ENCODE measurements at regions of chr7 and their contacts with region 1.

Region 1: GRCh38 chr7:23273141-23273599 is 26.0 kb upstream of the MALSU1 start:
- DNase-seq: peak; percentile 91
- H3K4me3 Mint-ChIP-seq: peak overlapping the region; percentile 29
- H3K27ac Mint-ChIP-seq: no peak overlapping the region
- H3K4me1 Mint-ChIP-seq: peaks cover 15% of the 10 kb centered on the region
- H3K27me3 Mint-ChIP-seq: peaks cover 5% of the 10 kb centered on the region

Region 2: GRCh38 chr7:23114896-23115295 is 158.3 kb before region 1 on chr7:
- CTCF ChIA-PET with region 1: no interaction called
- POLR2A ChIA-PET with region 1: no interaction called
- DNase-seq: no peak
- H3K4me3 Mint-ChIP-seq: no peak overlapping the region
- H3K27ac Mint-ChIP-seq: no peak overlapping the region
- H3K4me1 Mint-ChIP-seq: peaks cover 2% of the 10 kb centered on the region
- H3K27me3 Mint-ChIP-seq: no peaks in the 10 kb centered on the region

Region 3: DNA sequence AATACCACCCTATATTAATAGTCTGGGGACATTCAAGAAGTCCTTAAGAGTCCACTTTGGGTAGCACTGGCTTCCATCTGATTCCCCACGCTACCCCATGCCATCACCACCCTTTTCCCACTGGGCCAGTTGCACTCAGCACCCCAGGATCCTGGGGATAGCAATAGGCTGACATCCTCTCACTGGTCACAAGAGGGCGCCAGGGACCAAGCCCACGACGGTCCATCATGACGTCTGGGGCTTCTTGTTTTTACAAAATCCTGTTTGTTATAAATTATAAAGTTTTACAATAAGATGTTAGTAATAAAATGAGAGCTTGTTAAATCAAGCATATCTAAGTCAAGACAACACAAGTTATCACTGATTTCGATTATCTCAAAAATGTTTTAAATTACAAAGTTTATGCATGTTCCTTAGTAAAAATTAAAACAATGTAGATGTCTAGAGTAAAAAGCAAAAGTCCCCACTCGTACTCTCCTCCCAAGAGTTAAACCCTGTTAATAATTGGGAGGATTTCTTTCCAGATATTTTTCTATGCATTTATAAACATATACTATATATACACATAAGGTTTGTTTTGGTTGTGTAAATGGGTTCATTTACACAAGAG is 11.2 kb before region 1 on chr7:
- CTCF ChIA-PET with region 1: interaction called, 90 read pairs
- POLR2A ChIA-PET with region 1: no interaction called
- DNase-seq: peak; percentile 65
- H3K4me3 Mint-ChIP-seq: no peak overlapping the region
- H3K27ac Mint-ChIP-seq: no peak overlapping the region
- H3K4me1 Mint-ChIP-seq: peaks cover 5% of the 10 kb centered on the region
- H3K27me3 Mint-ChIP-seq: peaks cover 12% of the 10 kb centered on the region

Region 4: GRCh38 chr7:23298885-23299769 is 26.0 kb after region 1 on chr7 and contains the start of gene MALSU1:
- CTCF ChIA-PET with region 1: interaction called, 11 read pairs
- POLR2A ChIA-PET with region 1: interaction called, 6 read pairs
- DNase-seq: peak; percentile 96
- H3K4me3 Mint-ChIP-seq: peak within 1 kb of the TSS; percentile 96
- H3K27ac Mint-ChIP-seq: peak within 1 kb of the TSS; percentile 91
- H3K4me1 Mint-ChIP-seq: peaks cover 32% of the 10 kb centered on the region
- H3K27me3 Mint-ChIP-seq: no peaks in the 10 kb centered on the region
- total RNA-seq, gene MALSU1: 49.8 to 51.8 TPM

Region 5: GRCh38 chr7:23357190-23358093 is 84.3 kb after region 1 on chr7:
- CTCF ChIA-PET with region 1: interaction called, 12 read pairs
- POLR2A ChIA-PET with region 1: interaction called, 3 read pairs
- DNase-seq: no peak
- H3K4me3 Mint-ChIP-seq: no peak overlapping the region
- H3K27ac Mint-ChIP-seq: peak overlapping the region; percentile 42
- H3K4me1 Mint-ChIP-seq: peaks cover 28% of the 10 kb centered on the region
- H3K27me3 Mint-ChIP-seq: peaks cover 28% of the 10 kb centered on the region

Region 6: DNA sequence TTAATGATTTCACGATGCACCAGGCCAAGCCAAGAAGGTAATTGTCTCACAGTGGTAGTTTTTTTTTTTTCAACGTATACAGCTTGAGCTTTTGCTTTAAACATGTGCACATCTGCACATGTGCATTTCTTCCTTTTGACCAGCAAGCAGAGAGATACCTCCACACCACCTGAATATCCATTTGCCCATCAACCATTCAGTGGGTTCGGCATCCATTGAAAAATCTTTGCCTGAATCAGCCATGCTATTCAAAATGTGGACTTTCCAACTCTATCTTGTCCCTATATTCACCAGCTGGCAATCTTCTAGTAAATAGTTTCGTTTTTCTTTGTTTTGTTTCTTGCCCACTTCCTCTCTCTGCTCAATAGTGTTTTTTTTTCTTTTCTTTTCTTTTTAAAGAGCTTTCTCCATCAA is 266.3 kb after region 1 on chr7:
- CTCF ChIA-PET with region 1: interaction called, 36 read pairs
- POLR2A ChIA-PET with region 1: no interaction called
- DNase-seq: no peak
- H3K4me3 Mint-ChIP-seq: peak overlapping the region; percentile 57
- H3K27ac Mint-ChIP-seq: peak overlapping the region; percentile 87
- H3K4me1 Mint-ChIP-seq: peaks cover 17% of the 10 kb centered on the region
- H3K27me3 Mint-ChIP-seq: no peaks in the 10 kb centered on the region

Region 7: GRCh38 chr7:23546897-23547572 is 273.9 kb after region 1 on chr7:
- CTCF ChIA-PET with region 1: interaction called, 36 read pairs
- POLR2A ChIA-PET with region 1: interaction called, 3 read pairs
- DNase-seq: peak; percentile 81
- H3K4me3 Mint-ChIP-seq: no peak overlapping the region
- H3K27ac Mint-ChIP-seq: no peak overlapping the region
- H3K4me1 Mint-ChIP-seq: peaks cover 10% of the 10 kb centered on the region
- H3K27me3 Mint-ChIP-seq: no peaks in the 10 kb centered on the region